ENCODE measurements at regions of chr21 and their contacts with region 1.

Region 1: GRCh38 chr21:42227909-42228708 is 9.2 kb downstream of the ABCG1 start:
- DNase-seq: peak; percentile 93
- H3K4me3 Mint-ChIP-seq: peak overlapping the region; percentile 26
- H3K27ac Mint-ChIP-seq: peak overlapping the region; percentile 84
- H3K4me1 Mint-ChIP-seq: peaks cover 73% of the 10 kb centered on the region
- H3K27me3 Mint-ChIP-seq: no peaks in the 10 kb centered on the region

Region 2: DNA sequence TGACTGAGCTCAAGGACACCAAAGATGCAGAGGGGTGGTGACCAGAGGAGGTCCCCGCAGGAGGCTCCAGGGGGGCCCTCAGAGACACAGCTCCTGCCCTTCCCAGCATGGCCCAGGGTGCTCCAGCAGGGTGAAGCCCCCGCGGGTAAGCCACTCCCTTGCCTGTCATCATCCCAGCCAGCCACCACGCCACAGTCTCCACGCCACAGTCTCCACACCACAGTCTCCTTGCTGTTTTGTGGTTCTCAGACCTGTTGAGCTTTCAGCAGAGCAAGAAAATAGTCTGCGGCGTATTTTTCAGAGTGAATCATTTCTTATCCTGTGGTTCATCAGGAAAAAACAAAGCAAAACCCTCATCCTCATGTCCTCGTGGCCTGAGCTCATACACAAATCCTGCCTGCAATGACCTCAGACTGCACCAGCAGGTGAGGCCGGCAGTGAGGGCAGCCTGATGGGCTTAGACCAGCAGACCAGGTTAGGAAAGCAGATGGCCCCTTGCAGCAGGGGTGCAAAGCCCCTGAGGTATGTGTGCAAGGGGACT is 34.9 kb before region 1 on chr21:
- CTCF ChIA-PET with region 1: interaction called, 3 read pairs
- POLR2A ChIA-PET with region 1: interaction called, 246 read pairs
- DNase-seq: peak; percentile 89
- H3K4me3 Mint-ChIP-seq: peak overlapping the region; percentile 12
- H3K27ac Mint-ChIP-seq: peak overlapping the region; percentile 70
- H3K4me1 Mint-ChIP-seq: peaks cover 72% of the 10 kb centered on the region
- H3K27me3 Mint-ChIP-seq: peaks cover 15% of the 10 kb centered on the region

Region 3: DNA sequence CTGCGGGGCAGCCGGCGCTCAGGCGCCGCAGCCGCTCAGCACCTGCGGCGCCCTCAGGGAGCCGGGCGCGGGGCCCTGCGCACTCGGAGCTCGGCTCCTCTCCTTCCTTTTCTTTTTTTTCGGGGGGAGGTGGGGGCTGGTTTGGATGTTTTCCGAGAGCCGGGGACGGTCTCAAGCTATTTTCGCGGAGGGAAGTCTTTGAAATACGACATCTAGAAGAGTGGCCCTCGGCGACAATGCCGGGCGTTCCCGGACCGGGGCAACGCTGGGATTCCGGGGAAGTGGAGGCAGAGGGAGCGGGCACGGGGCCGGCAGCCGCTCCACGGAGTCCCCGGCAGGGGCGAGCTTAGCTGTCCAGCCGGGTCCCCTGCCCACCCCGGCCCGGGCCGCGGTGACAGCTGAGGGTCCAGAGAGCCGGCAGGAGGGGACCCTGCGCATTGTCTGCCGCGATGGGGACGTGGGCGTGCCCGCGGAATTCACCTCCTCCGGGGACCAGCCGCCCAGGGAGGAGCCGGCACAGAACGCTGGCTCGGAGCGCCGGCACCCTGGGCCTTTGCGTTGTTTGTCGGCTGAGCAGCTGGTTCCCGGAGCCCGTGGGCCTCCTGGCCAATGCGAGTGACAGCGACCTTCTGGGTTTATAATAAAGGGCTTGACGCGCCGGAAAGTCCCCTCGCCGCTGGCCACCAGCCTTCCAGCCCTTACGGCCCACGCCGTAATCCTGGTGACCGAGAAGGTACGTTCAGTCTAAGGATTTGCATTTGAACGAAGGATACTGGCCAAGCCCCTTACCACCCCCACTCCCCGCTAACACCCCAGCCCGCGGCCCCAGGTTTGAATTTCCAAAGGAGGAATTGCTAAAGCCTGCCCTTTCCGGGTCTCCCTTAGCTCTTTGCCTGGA is 286.1 kb after region 1 on chr21:
- CTCF ChIA-PET with region 1: no interaction called
- POLR2A ChIA-PET with region 1: no interaction called
- DNase-seq: peak; percentile 64
- H3K4me3 Mint-ChIP-seq: peak overlapping the region; percentile 62
- H3K27ac Mint-ChIP-seq: peak overlapping the region; percentile 1
- H3K4me1 Mint-ChIP-seq: peaks cover 13% of the 10 kb centered on the region
- H3K27me3 Mint-ChIP-seq: peaks cover 27% of the 10 kb centered on the region